Astrocyte of the cerebellum (primary cell): ENCODE measurements at regions of chrX and their contacts with region 1.

Region 1: DNA sequence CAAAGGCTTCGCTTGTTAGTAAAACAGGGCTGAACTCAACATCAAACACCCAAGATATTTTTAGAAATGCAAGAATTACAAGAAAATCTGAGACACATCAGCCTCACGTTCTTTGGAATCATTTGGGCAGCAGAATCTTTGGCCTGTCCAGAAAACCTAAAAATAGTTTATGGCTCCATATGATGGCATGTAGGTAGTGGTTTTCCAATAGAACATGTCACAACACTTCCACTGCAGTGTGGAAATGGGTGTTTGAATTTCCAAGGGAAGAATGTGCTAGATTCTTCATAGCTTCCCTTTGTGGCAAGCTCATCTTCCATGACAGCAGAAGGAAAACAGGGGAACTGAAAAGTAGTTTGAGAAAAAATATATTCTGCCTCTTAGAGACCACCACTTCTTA is 118.8 kb downstream of the ARHGAP6 start:
- DNase-seq: no peak
- H3K4me3 ChIP-seq: no peak overlapping the region
- CTCF ChIP-seq: no peak

Region 2: GRCh38 chrX:11461201-11462001 is 85.5 kb before region 1 on chrX:
- in situ Hi-C with region 1: no loop called
- DNase-seq: no peak
- H3K4me3 ChIP-seq: no peak overlapping the region
- CTCF ChIP-seq: no peak

Region 3: GRCh38 chrX:11609109-11609730 is 62.3 kb after region 1 on chrX:
- in situ Hi-C with region 1: no loop called
- DNase-seq: no peak
- H3K4me3 ChIP-seq: no peak overlapping the region
- CTCF ChIP-seq: no peak

Region 4: GRCh38 chrX:11629593-11630211 is 82.8 kb after region 1 on chrX:
- in situ Hi-C with region 1: loop called (anchors 5 kb)
- DNase-seq: peak; percentile 91
- H3K4me3 ChIP-seq: no peak overlapping the region
- CTCF ChIP-seq: no peak